Activated CD4-positive, alpha-beta memory T cell treated with anti-CD3 and anti-CD28 coated beads for 36 hours (primary cell): ENCODE measurements at regions of chr3 and their contacts with region 1.

Region 1: DNA sequence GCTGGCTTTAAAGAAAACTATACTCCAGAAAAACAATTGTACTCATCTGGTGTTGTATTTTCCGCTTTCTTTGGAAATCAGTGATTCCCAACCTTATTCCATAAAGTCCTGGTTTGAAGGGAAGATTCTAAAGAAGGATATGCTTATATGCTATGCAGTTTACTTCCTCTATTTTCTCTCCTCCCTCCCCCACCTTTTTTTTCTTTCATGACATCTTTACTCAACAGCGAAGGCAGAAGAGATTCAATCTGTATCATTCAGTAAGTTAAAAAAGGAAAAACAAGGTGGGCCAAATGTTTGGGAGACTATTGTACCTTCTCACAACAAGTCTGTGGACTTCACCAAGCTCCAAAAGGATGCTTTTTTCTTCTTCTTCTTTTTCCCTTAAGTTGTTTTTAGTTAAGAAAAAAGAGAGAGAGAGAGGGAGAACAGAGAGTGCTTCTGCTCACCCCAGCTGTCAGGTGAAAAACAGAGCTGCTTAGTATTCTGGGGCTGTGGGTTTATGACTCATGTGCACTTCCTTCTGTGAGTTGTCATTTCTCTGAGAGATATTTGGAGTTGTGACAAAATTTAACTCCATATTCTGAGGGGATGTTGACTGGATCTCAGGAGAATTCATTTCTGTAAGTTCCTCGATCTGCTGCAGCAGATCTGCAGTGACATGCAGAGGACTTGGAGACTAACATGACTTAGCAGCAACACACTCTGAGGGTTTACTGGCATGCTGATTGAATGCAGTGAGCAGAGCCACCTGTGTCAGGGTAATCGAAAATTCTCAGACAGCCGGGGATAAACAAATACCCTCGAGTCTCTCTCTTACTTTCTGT is 70.7 kb downstream of the SSR3 start:
- DNase-seq: peak; percentile 62
- H3K4me3 Mint-ChIP-seq: peak overlapping the region; percentile 66
- H3K27ac Mint-ChIP-seq: peak overlapping the region; percentile 90
- H3K4me1 Mint-ChIP-seq: peaks cover 41% of the 10 kb centered on the region
- H3K27me3 Mint-ChIP-seq: no peaks in the 10 kb centered on the region

Region 2: DNA sequence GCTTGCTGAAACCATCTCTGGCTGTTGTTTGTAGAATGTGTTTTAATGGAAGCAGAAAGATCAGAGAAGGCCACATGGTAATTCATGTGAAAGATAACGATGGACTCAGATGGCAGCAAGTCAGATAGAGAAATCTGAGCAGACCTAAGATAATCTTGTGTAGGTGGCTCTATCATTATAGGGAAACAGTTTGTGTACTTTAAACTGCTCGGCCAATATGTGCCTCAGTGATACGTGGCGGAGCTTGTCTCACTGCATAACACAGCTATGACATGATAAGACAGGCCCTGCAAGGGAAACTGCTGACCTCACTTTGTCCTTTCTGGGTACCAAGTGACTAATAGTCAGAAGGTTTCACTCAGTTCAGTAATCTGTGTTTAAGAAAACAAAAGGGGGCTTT is 1353.1 kb before region 1 on chr3:
- CTCF ChIA-PET with region 1: no interaction called
- POLR2A ChIA-PET with region 1: no interaction called
- intact Hi-C with region 1: no loop called
- DNase-seq: no peak
- H3K4me3 Mint-ChIP-seq: no peak overlapping the region
- H3K27ac Mint-ChIP-seq: no peak overlapping the region
- H3K4me1 Mint-ChIP-seq: no peaks in the 10 kb centered on the region
- H3K27me3 Mint-ChIP-seq: no peaks in the 10 kb centered on the region

Region 3: GRCh38 chr3:156509189-156510174 is 25.3 kb after region 1 on chr3:
- CTCF ChIA-PET with region 1: interaction called, 12 read pairs
- POLR2A ChIA-PET with region 1: no interaction called
- intact Hi-C with region 1: loop called (anchors 1 kb)
- DNase-seq: no peak
- H3K4me3 Mint-ChIP-seq: no peak overlapping the region
- H3K27ac Mint-ChIP-seq: no peak overlapping the region
- H3K4me1 Mint-ChIP-seq: peaks cover 13% of the 10 kb centered on the region
- H3K27me3 Mint-ChIP-seq: peaks cover 1% of the 10 kb centered on the region

Region 4: DNA sequence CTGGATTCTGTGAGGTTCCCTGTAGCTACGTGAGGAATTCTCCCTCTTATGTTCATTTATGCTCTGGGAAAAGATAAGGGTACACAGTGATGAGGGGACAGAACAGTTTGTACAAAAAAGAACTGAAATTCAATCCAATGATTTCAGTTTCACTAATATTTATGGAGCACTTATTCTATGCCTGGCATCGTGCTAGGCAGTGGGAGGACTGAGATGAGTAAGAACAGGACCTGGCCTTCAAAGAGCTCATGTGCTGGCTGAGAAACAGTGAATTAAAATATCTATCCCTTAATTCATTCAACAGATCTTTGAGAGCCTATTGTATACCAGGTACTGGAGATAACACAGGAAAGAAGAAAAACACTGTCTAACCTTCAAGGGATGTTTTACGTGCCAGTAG is 48.6 kb after region 1 on chr3:
- CTCF ChIA-PET with region 1: no interaction called
- POLR2A ChIA-PET with region 1: no interaction called
- intact Hi-C with region 1: no loop called
- DNase-seq: no peak
- H3K4me3 Mint-ChIP-seq: no peak overlapping the region
- H3K27ac Mint-ChIP-seq: no peak overlapping the region
- H3K4me1 Mint-ChIP-seq: peaks cover 8% of the 10 kb centered on the region
- H3K27me3 Mint-ChIP-seq: no peaks in the 10 kb centered on the region

Region 5: DNA sequence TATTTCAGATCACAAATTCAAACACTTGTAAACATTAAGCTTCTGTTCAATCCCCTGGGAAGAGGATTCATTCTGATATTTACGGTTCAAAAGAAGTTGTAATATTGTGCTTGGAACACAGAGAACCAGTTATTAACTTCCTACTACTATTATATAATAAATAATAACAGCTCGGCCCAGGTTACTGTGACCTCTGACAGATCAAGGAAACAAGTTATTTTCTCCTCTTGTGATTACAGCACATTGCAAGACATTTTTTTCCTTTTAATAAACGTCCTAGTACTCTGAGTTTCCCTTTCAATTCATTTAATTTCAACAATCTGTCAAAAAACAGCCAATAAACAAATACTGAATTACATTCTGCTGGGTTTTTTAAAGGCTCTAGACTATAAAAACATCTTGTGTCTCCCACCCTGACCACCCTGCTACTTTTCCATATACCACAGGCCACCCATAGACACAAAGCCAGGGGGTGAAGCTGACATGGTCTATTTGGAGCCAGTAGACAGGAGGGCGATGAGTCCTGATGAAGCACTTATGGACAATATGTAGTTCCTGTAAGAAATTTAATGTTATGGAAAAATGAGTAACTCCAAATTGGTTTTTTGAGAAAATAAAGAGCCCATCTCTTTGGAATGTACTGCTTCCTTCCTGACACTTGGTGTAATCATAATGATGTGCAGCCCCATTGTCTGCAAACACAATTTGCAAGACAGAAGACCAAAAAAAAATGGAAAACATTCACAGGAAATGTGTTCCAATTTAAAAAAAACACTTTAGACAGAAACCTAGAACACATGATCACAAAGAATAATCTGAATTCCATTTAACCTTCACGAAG is 58.8 kb after region 1 on chr3:
- CTCF ChIA-PET with region 1: interaction called, 4 read pairs
- POLR2A ChIA-PET with region 1: no interaction called
- intact Hi-C with region 1: loop called (anchors 5 kb)
- DNase-seq: no peak
- H3K4me3 Mint-ChIP-seq: no peak overlapping the region
- H3K27ac Mint-ChIP-seq: no peak overlapping the region
- H3K4me1 Mint-ChIP-seq: peaks cover 14% of the 10 kb centered on the region
- H3K27me3 Mint-ChIP-seq: no peaks in the 10 kb centered on the region

Region 6: DNA sequence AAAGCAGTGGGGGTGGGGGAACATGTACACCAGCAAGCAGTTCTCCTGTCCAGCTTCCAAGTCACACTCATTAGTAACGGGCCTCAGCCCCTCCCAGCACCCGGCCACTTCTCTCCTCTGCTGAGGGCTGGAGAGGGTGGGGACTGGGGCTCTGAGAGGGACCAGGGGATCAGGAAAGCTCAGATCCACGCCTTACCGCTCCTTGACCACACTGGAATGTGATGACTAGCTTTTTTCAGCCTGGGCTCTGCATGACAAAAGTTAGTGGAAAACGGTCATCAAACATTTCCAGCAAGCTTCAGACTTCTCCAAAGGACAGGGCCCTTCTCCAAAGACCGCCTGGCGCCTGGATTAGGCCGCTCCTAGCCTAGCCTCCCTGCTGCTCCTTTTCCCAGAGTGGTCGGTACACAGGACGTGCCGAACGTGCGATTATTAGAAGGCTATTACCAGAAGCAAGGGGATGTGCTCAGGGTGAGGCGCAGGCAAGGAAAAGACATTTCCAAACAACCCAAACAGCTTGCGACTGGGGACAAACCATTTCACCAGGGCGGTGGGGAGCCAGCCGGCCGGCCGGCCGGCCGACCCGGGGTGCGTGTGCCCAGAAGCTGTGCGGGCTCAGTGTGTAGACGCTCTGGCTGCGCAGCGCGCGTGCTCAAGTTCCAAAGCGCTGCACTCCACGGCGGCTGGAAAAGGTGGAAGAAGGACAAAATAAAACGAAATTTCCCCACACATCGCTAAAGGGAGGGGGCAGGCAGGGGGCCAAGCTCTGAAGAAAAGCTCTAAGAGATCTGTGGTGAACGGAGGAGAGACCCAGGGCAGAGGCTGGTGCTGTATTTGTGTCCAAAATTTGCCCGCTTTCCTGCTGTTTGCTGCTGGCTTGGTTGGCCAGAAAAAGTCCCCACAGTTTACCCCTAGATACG is 121.8 kb after region 1 on chr3:
- CTCF ChIA-PET with region 1: no interaction called
- POLR2A ChIA-PET with region 1: no interaction called
- intact Hi-C with region 1: loop called (anchors 5 kb)
- DNase-seq: no peak
- H3K4me3 Mint-ChIP-seq: peak overlapping the region; percentile 66
- H3K27ac Mint-ChIP-seq: no peak overlapping the region
- H3K4me1 Mint-ChIP-seq: peaks cover 28% of the 10 kb centered on the region
- H3K27me3 Mint-ChIP-seq: peaks cover 25% of the 10 kb centered on the region

Region 7: DNA sequence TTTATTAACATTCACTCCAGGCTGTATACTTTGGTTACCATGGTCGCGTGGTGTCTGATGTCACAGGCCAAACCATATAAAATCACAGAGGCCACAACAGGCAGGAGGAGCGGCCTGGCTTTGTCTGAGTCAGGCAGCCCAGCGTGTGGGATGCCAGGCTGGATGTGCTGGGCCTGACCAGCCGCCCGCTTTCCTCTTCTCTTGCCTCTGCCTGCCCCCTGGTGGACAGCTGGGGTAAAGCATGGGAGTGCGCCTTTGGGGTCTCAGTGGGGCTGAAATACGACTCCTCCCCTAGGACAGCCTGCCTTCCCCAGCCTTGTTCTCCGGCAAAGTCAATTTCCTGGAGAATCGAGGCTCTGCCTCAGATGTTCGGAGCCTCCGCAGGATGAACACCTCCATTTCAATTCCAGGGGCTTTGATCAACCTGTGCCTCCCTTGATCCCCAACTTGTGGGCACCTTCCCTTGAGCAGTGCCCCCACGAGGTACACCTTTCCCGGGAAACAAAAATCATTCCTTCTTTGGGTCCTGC is 597.6 kb after region 1 on chr3:
- CTCF ChIA-PET with region 1: no interaction called
- POLR2A ChIA-PET with region 1: no interaction called
- intact Hi-C with region 1: loop called (anchors 1 kb)
- DNase-seq: peak; percentile 90
- H3K4me3 Mint-ChIP-seq: no peak overlapping the region
- H3K27ac Mint-ChIP-seq: no peak overlapping the region
- H3K4me1 Mint-ChIP-seq: peaks cover 31% of the 10 kb centered on the region
- H3K27me3 Mint-ChIP-seq: no peaks in the 10 kb centered on the region